ENCODE measurements at regions of chr12 and their contacts with region 1.

Region 1: GRCh38 chr12:57069523-57069922 is 9.1 kb downstream of the NEMP1 start:
- DNase-seq: peak in 4 of 5 donors; percentile 44 to 69 (median 65)
- ATAC-seq: peak; percentile 86 to 98 (median 96)
- H3K4me3 ChIP-seq: no peak overlapping the region
- H3K27ac ChIP-seq: peak overlapping the region in 9 of 12 donors; percentile 5 to 81 (median 40)
- H3K4me1 ChIP-seq: peaks cover 0 to 19% (median 3%) of the 10 kb centered on the region in 12 donors
- H3K27me3 ChIP-seq: no peaks in the 10 kb centered on the region
- CTCF ChIP-seq: peak; percentile 77 to 92 (median 89)
- POLR2A ChIP-seq: no peak

Region 2: DNA sequence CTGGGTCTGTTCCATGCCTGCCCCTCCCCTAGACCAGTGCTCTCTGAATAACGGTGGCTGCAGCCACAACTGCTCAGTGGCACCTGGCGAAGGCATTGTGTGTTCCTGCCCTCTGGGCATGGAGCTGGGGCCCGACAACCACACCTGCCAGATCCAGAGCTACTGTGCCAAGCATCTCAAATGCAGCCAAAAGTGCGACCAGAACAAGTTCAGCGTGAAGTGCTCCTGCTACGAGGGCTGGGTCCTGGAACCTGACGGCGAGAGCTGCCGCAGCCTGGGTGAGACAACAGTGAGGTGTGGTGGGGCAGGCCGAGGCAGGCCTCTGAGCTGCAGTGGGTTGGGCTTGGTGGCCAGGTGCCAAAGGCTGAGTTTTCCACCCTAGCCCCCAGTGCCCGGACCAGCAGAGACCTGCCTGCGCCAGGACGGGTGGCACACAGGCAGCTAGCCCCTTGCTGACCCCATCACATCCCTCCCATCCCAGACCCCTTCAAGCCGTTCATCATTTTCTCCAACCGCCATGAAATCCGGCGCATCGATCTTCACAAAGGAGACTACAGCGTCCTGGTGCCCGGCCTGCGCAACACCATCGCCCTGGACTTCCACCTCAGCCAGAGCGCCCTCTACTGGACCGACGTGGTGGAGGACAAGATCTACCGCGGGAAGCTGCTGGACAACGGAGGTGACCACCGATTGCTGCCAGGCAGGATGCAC is 106.1 kb after region 1 on chr12:
- intact Hi-C with region 1: loop called in 6 of 10 experiments (anchors 5 to 10 kb)
- DNase-seq: peak; percentile 76 to 90 (median 82)
- ATAC-seq: peak; percentile 28 to 62 (median 48)
- H3K4me3 ChIP-seq: no peak overlapping the region
- H3K27ac ChIP-seq: peak overlapping the region in 5 of 12 donors; percentile 9 to 31 (median 20)
- H3K4me1 ChIP-seq: peaks cover 0 to 15% (median 1%) of the 10 kb centered on the region in 12 donors
- H3K27me3 ChIP-seq: no peaks in the 10 kb centered on the region
- CTCF ChIP-seq: peak; percentile 49 to 77 (median 66)
- POLR2A ChIP-seq: no peak

Region 3: GRCh38 chr12:57182921-57183790 is 113.6 kb after region 1 on chr12:
- intact Hi-C with region 1: loop called in 8 of 10 experiments (anchors 2 to 10 kb)
- DNase-seq: peak; percentile 61 to 84 (median 78)
- ATAC-seq: peak; percentile 52 to 83 (median 76)
- H3K4me3 ChIP-seq: no peak overlapping the region
- H3K27ac ChIP-seq: no peak overlapping the region
- H3K4me1 ChIP-seq: no peaks in the 10 kb centered on the region
- H3K27me3 ChIP-seq: no peaks in the 10 kb centered on the region
- CTCF ChIP-seq: peak; percentile 71 to 92 (median 87)
- POLR2A ChIP-seq: no peak

Region 4: DNA sequence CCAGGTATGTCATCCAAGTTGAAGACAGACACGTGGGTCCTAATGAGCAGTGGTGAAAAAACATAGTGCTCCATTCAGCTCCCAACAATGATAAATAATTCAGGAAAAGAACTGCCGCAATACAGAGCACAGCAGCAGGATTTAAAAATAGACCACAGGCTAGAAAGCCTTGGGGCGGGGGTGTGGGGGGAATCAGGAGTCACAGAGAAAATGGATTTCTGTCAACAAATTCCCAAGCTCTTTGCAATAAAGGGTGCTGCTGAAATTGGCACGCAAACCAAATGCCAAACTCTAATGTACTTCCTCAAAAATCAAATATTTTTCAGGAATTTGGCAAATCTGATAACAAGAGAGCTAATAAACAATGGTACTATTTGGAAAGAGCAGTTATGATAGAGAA is 302.7 kb after region 1 on chr12:
- intact Hi-C with region 1: no loop called
- DNase-seq: peak in 1 of 5 donors; percentile 25
- ATAC-seq: peak; percentile 78 to 90 (median 81)
- H3K4me3 ChIP-seq: no peak overlapping the region
- H3K27ac ChIP-seq: peak overlapping the region in 8 of 12 donors; percentile 2 to 72 (median 44)
- H3K4me1 ChIP-seq: peaks cover 0 to 25% (median 10%) of the 10 kb centered on the region in 12 donors
- H3K27me3 ChIP-seq: no peaks in the 10 kb centered on the region
- CTCF ChIP-seq: no peak
- POLR2A ChIP-seq: no peak